ENCODE measurements at regions of chr18 and their contacts with region 1.

Region 1: DNA sequence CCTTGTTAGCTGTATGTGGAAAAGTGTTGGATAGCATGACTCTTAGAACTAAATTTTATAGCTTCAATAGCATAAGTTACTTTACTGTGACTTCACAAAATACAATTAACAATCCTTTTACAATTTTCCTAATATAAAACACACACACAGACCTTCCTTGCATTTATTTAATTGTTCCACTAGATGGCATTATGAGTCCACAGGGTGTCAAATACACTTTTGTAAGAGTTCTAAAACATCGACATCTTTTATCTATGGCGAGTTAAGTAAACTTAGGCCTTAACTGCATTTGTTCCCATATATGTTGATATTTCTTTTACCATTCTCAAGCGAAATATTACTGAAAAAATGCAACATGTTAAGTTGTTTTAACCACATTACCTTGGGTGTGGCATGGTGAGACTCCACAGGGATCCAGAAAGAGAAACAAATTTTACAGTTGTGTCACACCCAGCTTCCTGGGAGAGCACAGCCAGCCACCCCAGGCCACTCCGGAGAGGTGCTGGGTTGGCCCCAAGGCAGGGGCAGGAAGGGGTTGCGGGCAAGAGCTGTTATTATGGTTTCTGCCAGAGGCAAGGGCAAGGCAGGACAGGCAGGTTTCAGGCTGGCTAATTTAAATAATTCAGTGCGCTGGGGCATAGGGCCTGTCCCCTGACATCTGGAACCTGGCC is 312.4 kb upstream of the MC4R start:
- DNase-seq: no peak
- H3K4me3 ChIP-seq: no peak overlapping the region
- H3K27ac ChIP-seq: no peak overlapping the region
- H3K4me1 ChIP-seq: no peaks in the 10 kb centered on the region
- H3K27me3 ChIP-seq: peaks cover 4% of the 10 kb centered on the region
- CTCF ChIP-seq: peak; percentile 73

Region 2: DNA sequence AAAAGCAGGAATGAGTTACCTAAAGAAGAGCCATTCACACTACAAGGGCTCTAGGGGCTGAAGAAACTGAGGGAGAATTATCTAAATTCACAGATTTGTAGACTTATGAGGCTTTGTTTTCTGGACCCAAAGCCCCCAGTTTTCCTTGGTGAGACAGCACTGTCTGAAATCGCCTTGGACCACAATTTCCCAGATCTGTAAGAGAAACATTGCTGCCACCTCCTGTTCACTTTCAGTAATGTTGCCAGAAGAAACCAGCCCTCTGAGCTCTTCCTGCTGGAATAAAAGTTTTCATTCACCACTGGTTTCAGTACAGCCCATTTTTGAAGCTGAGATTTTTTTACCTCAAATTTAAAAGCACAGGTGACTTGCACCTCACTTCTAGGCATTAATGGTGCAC is 817.5 kb after region 1 on chr18:
- intact Hi-C with region 1: loop called (anchors 10 kb)
- DNase-seq: no peak
- H3K4me3 ChIP-seq: no peak overlapping the region
- H3K27ac ChIP-seq: no peak overlapping the region
- H3K4me1 ChIP-seq: no peaks in the 10 kb centered on the region
- H3K27me3 ChIP-seq: peaks cover 3% of the 10 kb centered on the region
- CTCF ChIP-seq: peak; percentile 77